OCI-LY7 (cell line): ENCODE measurements at regions of chr7 and their contacts with region 1.

Region 1: DNA sequence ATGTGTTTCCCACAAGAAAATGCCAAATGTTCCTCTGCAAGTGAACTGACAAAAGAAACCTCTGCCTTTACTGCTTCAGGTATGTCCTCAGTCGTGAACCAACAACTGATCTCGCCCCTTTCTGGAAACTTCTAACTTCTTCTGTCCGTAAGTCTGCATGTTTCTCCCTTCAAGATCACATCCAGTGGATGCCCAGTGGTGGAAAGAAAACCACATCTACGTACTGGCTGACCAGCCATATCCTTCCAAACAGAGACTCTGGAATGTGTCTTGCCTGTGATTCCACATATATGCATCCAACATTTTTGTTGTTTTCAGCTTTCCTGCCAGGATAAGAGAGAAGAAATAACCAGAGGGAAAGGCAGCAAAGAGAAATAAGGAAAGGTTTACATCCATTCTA is 152.7 kb downstream of the GLI3 start:
- DNase-seq: no peak
- H3K4me3 ChIP-seq: no peak overlapping the region
- H3K27ac ChIP-seq: no peak overlapping the region
- H3K4me1 ChIP-seq: no peaks in the 10 kb centered on the region
- CTCF ChIP-seq: no peak

Region 2: DNA sequence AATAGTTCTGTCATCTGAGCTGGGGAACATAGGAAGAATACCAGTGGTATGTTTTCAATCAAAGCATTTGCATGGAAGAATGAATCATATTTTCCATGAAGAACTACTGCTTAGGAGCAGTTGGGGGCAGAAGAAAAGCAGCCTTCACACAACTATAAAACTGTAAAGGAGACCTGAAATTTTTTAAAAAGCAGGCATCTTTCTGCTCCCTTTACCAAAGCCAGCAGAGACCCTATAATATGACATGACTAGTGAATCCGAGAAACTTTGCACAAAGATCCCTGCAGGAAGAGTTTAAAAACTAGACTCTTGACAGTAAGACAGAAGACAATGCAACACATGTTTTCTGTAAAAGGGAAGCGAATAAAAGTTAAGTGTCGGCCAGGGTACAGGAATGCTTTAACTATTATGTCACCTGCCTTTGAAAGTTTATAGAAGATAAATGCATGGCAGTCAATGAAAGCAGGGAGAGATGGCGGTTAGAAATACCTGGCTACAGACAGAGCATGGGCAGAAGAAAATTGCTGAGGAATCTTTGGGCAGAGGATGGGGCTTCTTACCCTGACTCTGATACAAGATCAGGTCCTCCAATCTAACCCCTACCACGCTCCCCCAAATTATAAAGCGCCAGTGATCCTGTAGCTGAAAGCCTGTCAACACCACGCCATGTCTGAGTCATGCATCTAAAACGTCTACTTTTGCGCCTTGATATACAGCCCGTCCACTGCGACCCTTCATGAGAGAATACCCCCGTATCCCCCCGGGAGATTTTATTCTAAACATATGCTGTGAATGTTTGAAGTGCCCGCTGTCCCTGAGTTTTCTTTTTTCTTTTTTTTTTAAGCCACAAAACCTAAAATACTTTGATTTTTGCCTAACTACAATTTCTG is 59.7 kb after region 1 on chr7:
- CTCF ChIA-PET with region 1: no interaction called
- POLR2A ChIA-PET with region 1: interaction called, 10 read pairs
- intact Hi-C with region 1: no loop called
- DNase-seq: no peak
- H3K4me3 ChIP-seq: no peak overlapping the region
- H3K27ac ChIP-seq: no peak overlapping the region
- H3K4me1 ChIP-seq: no peaks in the 10 kb centered on the region
- CTCF ChIP-seq: no peak

Region 3: DNA sequence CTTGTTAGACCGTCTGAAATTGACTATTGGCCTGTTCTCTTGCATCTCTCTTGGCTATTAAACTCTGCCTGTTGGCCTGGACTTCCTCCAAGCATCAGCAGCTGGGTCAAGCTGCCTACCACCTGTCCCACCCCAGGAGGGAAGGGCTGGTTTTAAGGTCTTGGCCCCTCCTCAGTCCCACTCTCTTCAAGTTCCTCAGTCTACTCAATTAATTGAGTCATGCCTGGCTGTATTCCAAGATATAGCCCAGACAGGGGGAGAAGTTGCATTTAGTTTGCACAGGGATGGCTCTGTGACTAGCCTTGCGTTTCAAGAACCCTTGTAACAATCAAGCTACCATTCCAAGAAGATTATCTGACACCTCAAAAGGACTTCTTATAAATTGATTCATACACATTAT is 266.5 kb after region 1 on chr7:
- CTCF ChIA-PET with region 1: no interaction called
- POLR2A ChIA-PET with region 1: no interaction called
- intact Hi-C with region 1: no loop called
- DNase-seq: no peak
- H3K4me3 ChIP-seq: no peak overlapping the region
- H3K27ac ChIP-seq: no peak overlapping the region
- H3K4me1 ChIP-seq: no peaks in the 10 kb centered on the region
- CTCF ChIP-seq: no peak